ENCODE measurements at regions of chr17 and their contacts with region 1.

Region 1: DNA sequence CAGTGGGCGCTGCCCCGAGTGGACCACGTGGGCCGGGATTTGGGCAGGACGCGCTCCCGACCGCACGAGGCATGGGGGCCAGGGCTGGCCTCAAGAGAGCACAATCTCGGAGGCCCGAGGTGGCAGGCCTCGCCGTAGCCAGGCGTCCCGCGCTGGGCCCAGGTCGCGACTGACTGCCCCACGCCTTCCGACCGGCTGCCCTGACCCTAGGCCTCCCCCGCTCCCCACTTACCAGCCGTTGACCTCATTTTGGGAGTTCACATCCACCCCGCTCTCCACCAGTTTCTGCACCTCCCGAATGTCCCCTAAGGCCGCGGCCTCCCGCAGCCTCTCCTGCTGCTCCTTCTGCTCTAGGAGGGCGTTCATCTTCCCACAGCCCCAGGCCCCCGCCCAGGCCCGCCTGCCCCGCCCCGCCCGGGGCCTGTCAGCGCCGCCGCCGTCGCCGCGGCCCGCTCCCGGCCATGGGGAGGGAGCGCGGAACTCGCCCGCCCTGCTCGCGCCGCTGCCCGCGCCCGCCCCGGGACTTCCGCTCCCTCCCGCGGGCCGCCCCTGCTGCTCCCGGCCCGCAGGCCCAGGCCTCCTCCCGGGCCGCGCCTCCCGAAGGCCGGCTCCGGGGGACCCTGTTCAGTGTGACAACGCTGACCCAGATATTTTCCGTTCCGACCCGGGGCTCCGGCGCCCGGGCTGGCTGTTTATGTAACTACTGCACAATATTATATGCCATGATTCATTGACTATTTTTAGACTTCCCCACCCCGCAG is at the start of gene ANKRD40:
- DNase-seq: peak; percentile 94
- ATAC-seq: peak; percentile 76
- H3K4me3 Mint-ChIP-seq: peak within 1 kb of the TSS; percentile 91
- H3K27ac Mint-ChIP-seq: peak within 1 kb of the TSS; percentile 99
- H3K4me1 Mint-ChIP-seq: peaks cover 46% of the 10 kb centered on the region
- H3K27me3 Mint-ChIP-seq: no peaks in the 10 kb centered on the region
- total RNA-seq, gene ANKRD40: 28.0 to 29.8 TPM

Region 2: GRCh38 chr17:50345432-50346312 is 361.8 kb before region 1 on chr17 and contains the start of gene XYLT2:
- CTCF ChIA-PET with region 1: no interaction called
- POLR2A ChIA-PET with region 1: no interaction called
- intact Hi-C with region 1: loop called in 1 of 2 experiments (anchors 1 kb)
- DNase-seq: peak; percentile 95
- ATAC-seq: peak; percentile 91
- H3K4me3 Mint-ChIP-seq: peak within 1 kb of the TSS; percentile 90
- H3K27ac Mint-ChIP-seq: peak within 1 kb of the TSS; percentile 94
- H3K4me1 Mint-ChIP-seq: peaks cover 32% of the 10 kb centered on the region
- H3K27me3 Mint-ChIP-seq: no peaks in the 10 kb centered on the region
- total RNA-seq, gene XYLT2: 29.8 to 30.4 TPM

Region 3: DNA sequence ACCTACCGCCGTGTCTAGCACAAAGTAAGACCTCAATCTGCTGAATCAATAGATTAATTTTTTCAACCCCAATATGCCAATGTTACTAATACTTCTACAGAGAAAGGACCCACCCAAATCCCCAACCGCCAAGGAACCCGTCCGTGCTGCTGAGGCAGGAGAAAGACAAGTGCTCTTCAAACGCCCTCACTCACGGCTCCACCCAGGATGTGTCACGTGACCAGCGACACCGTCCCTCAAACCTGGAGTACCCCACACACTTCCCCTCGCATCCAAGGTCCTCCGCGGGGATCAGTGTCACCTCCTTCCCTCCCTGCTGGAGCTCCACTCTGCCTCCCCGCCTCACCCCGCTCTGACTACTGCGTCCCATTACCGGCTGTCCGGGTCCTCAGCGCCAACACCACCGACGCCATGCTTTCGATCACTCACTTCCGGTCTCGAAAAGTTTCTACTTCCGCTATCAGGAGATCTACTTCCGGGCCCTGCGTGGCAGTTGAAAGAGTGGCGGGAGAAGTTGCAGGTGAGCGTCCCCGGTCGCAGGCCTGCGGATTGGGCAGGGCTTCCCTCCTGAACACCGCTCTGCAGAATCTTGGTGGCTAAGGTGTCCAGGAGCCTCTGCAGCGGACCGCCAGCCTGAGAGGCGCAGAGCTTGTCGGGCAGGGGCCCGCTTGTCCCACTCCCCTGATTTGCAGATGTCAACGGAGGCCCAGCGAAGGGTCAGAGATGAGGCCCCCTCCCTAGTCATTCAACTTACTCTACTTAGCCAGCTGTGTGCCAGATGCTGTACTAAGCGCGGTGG is 334.5 kb before region 1 on chr17 and contains the starts of genes EME1 and MRPL27:
- CTCF ChIA-PET with region 1: no interaction called
- POLR2A ChIA-PET with region 1: no interaction called
- intact Hi-C with region 1: loop called (anchors 1 to 5 kb)
- DNase-seq: peak; percentile 89
- ATAC-seq: peak; percentile 95
- H3K4me3 Mint-ChIP-seq: peak within 1 kb of the TSS; percentile 89
- H3K27ac Mint-ChIP-seq: peak within 1 kb of the TSS; percentile 99
- H3K4me1 Mint-ChIP-seq: peaks cover 22% of the 10 kb centered on the region
- H3K27me3 Mint-ChIP-seq: no peaks in the 10 kb centered on the region
- total RNA-seq, gene EME1: 38.3 to 40.8 TPM
- total RNA-seq, gene MRPL27: 40.1 to 56.2 TPM

Region 4: DNA sequence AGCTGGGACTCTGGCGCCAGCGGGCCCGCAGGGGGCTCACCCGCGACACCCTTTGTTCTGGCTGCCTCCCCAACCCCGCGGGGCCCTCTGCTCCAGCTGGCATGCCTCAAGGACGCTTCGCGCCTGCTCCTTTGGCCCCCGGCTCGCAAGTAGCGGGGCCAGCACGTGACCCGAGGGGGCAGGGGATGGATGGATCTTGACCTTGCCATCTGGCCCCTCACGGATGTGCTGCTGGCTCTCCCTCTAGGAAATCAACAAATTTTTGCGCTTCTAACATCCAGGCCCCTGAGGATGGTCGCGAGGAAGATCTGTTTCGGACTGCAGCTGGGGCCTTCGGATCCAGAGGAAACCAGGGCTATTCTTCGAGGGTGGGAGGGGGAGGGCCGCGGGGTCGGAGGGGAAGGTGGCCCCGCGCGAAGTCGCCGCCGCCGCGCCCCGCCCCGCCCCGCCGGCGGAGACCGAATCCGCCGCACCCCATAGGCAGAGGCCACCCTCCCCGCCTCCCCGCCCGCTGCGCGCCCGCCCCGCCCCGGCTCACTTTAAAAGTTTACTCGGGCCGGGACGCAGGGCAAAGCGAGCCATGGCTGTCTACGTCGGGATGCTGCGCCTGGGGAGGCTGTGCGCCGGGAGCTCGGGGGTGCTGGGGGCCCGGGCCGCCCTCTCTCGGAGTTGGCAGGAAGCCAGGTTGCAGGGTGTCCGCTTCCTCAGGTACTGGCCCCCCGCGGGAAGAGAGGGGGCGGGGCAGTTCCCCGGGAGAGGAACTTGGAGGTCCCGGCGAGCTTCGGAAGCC is 281.6 kb before region 1 on chr17 and contains the start of gene ACSF2:
- CTCF ChIA-PET with region 1: no interaction called
- POLR2A ChIA-PET with region 1: no interaction called
- intact Hi-C with region 1: loop called in 1 of 2 experiments (anchors 2 kb)
- DNase-seq: peak; percentile 86
- ATAC-seq: peak; percentile 84
- H3K4me3 Mint-ChIP-seq: peak within 1 kb of the TSS; percentile 76
- H3K27ac Mint-ChIP-seq: peak within 1 kb of the TSS; percentile 70
- H3K4me1 Mint-ChIP-seq: peaks cover 32% of the 10 kb centered on the region
- H3K27me3 Mint-ChIP-seq: no peaks in the 10 kb centered on the region
- total RNA-seq, gene ACSF2: 15.0 to 15.7 TPM

Region 5: DNA sequence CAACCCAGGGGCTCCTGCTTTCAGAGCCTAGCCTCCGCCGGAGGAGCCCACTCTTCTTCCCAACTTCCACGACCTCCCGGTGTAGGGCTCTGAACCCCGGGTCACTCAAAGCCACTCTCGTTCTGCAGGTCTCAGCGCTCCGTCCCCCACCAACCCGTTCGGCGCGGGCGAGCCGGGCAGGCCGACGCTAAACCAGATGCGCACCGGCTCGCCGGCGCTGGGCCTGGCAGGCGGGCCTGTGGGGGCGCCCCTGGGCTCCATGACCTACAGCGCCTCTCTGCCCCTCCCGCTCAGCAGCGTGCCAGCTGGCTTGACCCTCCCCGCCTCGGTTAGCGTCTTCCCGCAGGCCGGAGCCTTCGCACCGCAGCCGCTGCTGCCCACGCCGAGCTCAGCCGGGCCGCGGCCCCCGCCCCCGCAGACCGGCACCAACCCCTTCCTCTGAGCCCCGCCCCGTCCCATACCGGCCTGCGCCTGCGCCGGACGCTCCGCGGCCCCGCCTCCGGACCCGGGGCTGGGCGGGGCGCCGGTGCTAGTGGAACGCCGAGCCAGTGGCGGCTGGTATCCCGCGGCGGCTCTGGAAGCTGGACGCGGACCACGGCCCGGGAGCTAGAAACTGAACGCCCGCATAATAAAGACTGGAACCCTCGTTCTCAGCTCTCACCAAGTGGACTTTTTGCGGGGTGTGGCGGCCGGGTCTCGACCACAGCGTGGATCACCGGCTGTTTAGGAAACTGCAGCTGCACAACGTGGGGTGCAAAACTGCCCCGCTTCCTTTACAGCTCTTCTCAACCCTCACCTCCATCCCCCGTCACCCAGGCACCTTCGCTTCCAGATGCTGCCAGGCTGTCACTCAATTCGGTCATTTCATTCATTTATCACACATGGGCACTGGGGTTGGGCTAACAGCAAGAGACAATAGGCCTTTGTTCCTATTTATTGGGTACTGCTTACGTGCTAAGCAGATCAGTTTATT is 165.5 kb before region 1 on chr17:
- CTCF ChIA-PET with region 1: no interaction called
- POLR2A ChIA-PET with region 1: no interaction called
- intact Hi-C with region 1: loop called in 1 of 2 experiments (anchors 5 kb)
- DNase-seq: peak; percentile 91
- ATAC-seq: peak; percentile 87
- H3K4me3 Mint-ChIP-seq: peak overlapping the region; percentile 72
- H3K27ac Mint-ChIP-seq: peak overlapping the region; percentile 82
- H3K4me1 Mint-ChIP-seq: peaks cover 11% of the 10 kb centered on the region
- H3K27me3 Mint-ChIP-seq: peaks cover 7% of the 10 kb centered on the region

Region 6: DNA sequence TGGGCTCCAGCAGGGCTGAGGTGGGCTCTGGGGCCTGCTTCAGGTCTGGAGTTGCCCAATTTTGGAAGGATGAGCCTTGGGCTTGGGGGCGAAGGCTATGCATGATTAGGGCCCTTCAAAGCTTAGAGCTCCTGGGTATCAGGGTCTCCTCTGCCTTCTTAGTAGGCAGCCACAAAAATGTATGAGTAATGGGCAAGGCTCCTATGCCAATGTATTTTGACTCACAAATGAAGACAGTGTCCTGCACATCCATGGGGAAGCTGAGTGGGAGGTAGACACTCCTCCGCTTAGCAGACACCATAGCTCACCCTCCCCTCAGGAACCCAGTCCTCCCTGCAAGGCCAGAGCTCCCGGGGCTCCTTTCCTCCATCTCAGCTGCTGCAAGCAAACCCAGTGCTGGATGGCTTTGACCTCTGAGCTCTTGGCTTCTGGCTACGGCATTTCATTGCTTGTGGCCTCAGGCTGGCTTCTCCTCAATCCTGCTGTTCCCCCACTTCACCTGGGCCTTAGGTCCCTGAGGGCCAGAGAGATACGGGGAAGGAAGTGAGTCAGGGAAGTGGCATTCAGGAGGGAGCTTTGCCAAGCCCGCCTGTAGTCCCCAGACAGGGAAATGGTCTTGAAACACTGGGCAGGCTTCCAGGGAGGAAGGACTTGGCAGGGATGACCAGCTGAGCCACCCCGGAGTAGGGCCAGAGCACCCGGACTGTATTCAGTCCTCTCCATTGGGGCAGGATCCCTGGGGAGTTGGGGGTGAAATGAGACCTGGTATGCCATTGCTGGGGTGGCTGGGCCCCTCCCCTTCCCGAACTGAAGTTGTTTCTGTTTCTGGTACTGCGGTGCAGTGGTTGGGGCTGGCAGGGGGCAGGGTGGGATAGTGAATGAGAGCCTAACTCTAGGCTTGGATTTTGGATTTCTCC is 68.4 kb before region 1 on chr17:
- CTCF ChIA-PET with region 1: no interaction called
- POLR2A ChIA-PET with region 1: no interaction called
- intact Hi-C with region 1: no loop called
- DNase-seq: no peak
- ATAC-seq: no peak
- H3K4me3 Mint-ChIP-seq: no peak overlapping the region
- H3K27ac Mint-ChIP-seq: no peak overlapping the region
- H3K4me1 Mint-ChIP-seq: no peaks in the 10 kb centered on the region
- H3K27me3 Mint-ChIP-seq: peaks cover 27% of the 10 kb centered on the region

Region 7: DNA sequence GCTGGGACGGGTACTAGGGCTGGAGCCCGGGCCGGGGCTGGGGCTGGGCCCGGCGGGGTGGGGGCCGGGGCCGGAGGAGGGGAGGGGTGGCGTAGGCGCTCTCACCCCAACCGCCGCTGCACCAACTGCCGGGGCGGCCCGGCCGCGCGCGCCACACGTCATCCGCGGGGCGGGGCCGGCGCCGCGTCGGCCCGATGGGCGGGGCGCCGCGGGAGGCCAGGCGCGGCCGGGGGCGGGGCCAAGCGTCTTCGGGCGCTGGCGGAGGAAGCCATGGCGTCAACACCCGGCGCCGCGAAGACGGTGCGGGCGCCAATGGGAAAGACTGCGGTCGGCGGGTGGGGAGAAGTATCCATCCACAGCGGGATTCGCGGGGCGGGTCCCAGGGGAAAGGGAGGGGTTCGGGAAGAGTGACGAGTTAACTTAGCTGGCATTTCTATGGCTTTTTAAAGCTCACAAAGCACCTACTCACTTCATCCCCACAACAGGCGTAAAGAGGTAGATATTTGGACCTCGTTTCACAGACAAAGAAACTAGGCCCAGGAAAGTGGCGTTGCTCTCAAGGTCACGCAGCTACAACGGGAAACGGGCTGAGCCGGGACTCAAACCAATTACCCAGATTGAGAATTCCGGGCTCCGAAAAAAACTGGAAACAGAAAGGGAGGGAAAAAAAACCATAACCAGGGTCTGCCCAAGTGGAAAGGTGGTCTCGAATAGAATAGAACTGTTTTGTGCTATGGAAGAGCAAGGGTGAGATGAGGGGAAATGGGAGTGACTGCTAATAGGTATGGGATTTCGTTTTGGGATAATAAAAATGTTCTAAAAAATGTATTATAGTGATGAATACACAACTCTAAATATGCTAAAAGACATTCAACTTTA is 413.5 kb after region 1 on chr17 and contains the start of gene SPAG9:
- CTCF ChIA-PET with region 1: no interaction called
- POLR2A ChIA-PET with region 1: no interaction called
- intact Hi-C with region 1: loop called in 1 of 2 experiments (anchors 5 kb)
- DNase-seq: peak; percentile 95
- ATAC-seq: peak; percentile 62
- H3K4me3 Mint-ChIP-seq: peak within 1 kb of the TSS; percentile 89
- H3K27ac Mint-ChIP-seq: peak within 1 kb of the TSS; percentile 100
- H3K4me1 Mint-ChIP-seq: peaks cover 51% of the 10 kb centered on the region
- H3K27me3 Mint-ChIP-seq: no peaks in the 10 kb centered on the region
- total RNA-seq, gene SPAG9: 48.0 to 88.2 TPM

Region 8: GRCh38 chr17:51260125-51260880 is 552.8 kb after region 1 on chr17 and contains the start of gene UTP18:
- CTCF ChIA-PET with region 1: no interaction called
- POLR2A ChIA-PET with region 1: no interaction called
- intact Hi-C with region 1: loop called in 1 of 2 experiments (anchors 5 kb)
- DNase-seq: peak; percentile 98
- ATAC-seq: peak; percentile 84
- H3K4me3 Mint-ChIP-seq: peak within 1 kb of the TSS; percentile 84
- H3K27ac Mint-ChIP-seq: peak within 1 kb of the TSS; percentile 97
- H3K4me1 Mint-ChIP-seq: peaks cover 61% of the 10 kb centered on the region
- H3K27me3 Mint-ChIP-seq: no peaks in the 10 kb centered on the region
- total RNA-seq, gene UTP18: 49.3 to 74.0 TPM

Measured in activated CD4-positive, alpha-beta T cell treated with anti-CD3 and anti-CD28 coated beads for 36 hours (primary cell).